Activated CD4-positive, alpha-beta T cell treated with anti-CD3 and anti-CD28 coated beads, Interleukin-2, amount 10 ng/mL, durations not matched to agents 24 days and 14 days (primary cell): ENCODE measurements at regions of chr9 and their contacts with region 1.

Region 1: DNA sequence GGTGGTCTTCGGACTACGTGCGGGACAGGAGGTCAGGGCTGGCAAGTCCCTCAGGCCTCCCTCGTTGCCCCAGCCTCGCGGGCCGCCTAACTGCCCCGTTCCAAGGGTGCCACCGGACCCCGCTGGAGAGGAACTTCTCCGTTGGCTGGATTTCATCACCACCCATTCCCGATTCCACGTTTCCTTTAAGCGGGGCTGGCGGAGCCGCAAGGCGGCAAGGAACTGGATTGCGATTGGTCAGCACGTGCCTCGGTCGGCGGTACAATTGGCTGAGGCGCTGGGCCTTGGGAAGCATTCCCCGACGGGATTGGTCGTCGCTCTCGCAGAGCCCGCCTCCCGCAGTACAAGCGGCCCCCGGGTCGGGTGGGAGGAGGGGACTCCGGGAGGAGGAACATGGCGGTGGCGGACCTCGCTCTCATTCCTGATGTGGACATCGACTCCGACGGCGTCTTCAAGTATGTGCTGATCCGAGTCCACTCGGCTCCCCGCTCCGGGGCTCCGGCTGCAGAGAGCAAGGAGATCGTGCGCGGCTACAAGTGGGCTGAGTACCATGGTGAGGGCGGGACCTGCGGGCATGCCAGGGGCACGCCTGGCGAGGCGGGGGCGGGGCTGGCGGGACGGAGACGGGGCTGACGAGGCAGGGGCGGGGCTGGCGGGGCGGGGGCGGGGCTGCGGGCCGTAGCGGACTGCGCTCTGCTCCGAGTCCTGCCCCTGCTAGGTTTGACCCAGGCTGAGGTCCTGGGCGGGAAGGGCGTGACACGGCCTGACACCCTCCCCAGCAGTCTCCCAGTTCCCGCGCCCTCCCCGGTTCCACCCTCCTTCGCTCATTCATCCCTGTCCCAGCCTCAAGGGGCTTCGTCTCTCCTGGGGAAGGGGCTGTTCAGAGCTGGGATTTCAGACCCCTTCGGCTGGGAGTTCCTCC is at the start of gene PHPT1:
- DNase-seq: peak; percentile 99
- H3K4me3 Mint-ChIP-seq: peak within 1 kb of the TSS; percentile 96
- H3K27ac Mint-ChIP-seq: peak within 1 kb of the TSS; percentile 94
- H3K4me1 Mint-ChIP-seq: peaks cover 11% of the 10 kb centered on the region
- H3K27me3 Mint-ChIP-seq: peaks cover 7% of the 10 kb centered on the region
- total RNA-seq, gene PHPT1: 134 and 145 TPM in 2 replicates

Region 2: DNA sequence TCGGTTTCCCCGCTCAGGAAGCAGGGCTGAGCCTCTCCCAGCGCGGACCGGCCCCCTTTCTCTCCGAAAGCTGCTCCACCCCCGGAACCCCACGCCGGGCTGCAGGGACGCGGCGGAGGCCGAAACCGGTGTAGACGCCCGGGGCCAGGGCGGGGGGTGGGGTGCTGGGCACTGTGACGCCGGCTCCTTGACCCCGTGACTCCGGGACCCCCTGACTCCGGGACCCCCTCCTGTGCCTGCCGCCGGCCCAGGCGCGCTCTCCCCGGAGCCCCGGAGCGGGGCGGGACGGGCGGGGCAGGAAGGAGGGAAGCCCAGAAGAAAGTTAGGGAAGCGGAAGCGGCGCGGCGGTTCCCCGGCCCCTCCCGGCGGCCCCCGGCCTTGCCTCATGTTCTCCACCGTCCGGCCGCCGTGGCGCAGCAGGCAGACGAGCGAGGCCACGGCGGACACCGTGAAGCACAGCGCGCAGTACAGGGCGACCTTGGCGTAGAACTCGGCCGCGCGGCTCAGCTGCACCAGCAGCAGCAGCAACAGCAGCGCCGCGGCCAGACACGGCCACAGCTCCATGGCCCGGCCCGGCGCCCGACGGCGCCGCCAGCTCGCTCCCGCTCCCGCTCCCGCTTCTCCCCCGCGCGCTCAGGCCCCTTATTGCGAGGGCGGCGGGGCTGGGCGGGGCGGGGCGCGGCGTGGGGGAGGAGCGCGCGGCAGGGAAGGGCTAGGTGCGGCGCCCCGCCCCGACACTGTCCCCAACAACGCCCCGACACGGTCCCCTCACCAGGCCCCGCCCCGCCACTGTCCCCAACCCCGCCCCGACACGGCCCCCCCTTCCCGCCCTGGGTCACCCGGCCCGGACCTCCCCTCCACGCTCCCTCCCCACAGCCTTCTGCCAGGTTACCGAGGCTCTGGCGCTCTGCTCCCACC is 162.2 kb before region 1 on chr9 and contains the start of gene AGPAT2:
- intact Hi-C with region 1: no loop called
- DNase-seq: peak; percentile 89
- H3K4me3 Mint-ChIP-seq: peak within 1 kb of the TSS; percentile 81
- H3K27ac Mint-ChIP-seq: peak within 1 kb of the TSS; percentile 65
- H3K4me1 Mint-ChIP-seq: peaks cover 4% of the 10 kb centered on the region
- H3K27me3 Mint-ChIP-seq: peaks cover 4% of the 10 kb centered on the region
- total RNA-seq, gene AGPAT2: 25.6 and 25.9 TPM in 2 replicates

Region 3: DNA sequence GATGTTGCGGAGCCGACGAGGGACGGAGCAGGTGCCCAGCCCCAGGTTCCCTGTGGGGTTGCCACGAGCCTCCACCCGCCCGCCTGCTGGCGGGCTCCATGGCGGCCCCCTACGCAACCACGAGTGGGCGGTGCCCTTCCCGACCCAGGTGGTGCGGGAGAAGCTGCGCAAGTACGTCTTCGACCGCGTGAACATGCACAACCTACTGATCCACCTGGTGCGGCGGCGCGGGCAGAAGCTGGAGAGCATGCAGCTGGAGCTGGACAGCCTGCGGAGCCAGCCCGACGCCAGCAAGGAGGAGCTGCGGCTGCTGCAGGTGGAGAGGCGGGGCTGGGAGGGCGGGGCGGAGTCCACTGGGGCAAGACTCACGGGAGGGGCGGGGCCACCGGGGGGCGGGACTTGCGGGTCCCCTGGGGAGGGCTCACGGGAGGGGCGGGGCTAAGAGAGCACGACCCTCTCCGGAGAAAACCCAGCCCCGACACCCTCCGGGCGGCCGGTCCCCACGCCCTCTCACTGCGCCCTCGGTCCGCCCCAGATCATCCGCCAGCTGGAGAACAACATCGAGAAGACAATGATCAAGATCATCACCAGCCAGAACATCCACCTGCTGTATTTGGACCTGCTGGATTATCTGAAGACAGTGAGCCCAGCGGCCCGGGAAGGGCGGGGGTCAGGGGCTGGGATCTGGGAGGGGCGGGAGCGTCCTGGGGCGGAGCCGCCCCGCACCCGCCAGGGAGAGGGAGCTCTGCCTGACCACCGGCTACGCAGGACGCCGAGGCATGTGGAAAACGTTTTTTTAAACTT is 49.2 kb before region 1 on chr9:
- intact Hi-C with region 1: loop called (anchors 2 kb)
- DNase-seq: peak; percentile 91
- H3K4me3 Mint-ChIP-seq: peak overlapping the region; percentile 86
- H3K27ac Mint-ChIP-seq: peak overlapping the region; percentile 59
- H3K4me1 Mint-ChIP-seq: peaks cover 10% of the 10 kb centered on the region
- H3K27me3 Mint-ChIP-seq: peaks cover 26% of the 10 kb centered on the region

Region 4: DNA sequence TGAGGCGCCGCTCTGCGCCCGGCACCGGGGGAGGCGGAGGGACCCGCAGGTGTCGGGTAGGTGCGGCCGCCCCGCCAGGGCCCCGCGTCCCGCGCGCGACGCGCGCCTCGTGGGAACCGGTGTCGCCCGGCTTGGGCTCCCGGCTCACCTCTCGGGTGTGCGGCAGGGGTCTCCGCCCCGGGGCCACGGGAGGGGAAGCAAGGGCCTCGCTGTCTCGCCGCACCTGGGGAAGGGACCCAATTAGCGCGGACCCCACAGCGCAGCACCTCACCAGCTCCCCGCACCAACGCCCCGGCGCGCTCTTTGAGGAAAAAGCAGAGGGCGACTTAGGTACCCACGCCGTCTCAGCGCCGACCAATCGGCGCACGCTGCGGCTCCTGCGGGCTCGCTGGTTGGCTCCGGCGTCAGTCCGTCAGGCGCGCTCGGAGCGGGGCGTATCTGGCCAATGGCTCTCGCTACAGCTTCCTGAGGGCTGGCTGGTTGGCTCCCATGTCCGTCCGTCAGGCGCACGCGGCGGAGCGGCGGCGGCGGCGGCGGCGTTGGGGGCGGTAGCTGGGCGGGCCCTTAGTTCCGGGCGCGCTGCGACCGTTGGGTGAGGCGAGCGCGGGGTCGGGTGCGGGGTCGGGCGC is 36.8 kb after region 1 on chr9 and contains the start of gene TRAF2:
- intact Hi-C with region 1: loop called (anchors 1 kb)
- DNase-seq: peak; percentile 99
- H3K4me3 Mint-ChIP-seq: peak within 1 kb of the TSS; percentile 100
- H3K27ac Mint-ChIP-seq: peak within 1 kb of the TSS; percentile 95
- H3K4me1 Mint-ChIP-seq: peaks cover 37% of the 10 kb centered on the region
- H3K27me3 Mint-ChIP-seq: no peaks in the 10 kb centered on the region
- total RNA-seq, gene TRAF2: 61.6 and 66.6 TPM in 2 replicates

Region 5: DNA sequence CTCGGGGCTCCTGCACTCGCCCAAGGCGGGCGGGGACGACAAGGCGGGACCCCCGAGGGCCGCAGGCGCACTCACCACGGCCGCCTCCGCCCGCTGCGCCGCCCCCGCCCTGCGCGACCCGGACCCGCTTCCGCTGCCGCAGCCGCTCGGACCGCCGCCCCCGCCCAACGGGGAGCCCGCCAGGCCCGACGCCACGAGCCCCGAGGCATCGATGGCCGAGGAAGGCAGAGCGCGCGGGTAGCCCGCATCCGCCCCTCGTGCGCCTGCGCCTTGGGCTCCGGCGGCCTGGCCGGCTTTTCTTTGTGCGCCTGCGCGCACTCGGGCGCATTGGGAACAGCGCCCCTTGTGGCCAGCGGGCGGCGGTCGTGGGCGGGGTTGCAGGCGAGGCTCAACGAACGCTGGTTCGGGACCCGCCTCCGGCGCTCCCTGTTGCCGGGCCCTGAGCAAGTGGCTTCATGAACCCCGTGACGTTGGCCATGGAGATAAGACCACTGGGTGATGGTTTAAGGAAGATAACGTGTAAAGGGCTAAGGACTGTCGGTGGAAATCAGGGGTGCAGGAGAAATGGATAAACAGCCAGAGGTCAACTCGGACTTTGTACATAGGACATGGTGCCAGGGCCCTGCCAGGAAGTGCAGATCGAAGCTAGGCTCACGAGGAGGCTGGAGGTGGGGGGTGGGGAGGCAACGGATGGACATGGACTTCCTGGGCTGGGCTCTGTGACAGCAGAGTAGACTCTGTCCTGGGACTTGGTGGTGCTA is 95.4 kb after region 1 on chr9 and contains the starts of genes C8G and FBXW5:
- intact Hi-C with region 1: loop called (anchors 1 kb)
- DNase-seq: peak; percentile 99
- H3K4me3 Mint-ChIP-seq: peak within 1 kb of the TSS; percentile 83
- H3K27ac Mint-ChIP-seq: peak within 1 kb of the TSS; percentile 87
- H3K4me1 Mint-ChIP-seq: peaks cover 3% of the 10 kb centered on the region
- H3K27me3 Mint-ChIP-seq: no peaks in the 10 kb centered on the region
- total RNA-seq, gene C8G: 0.69 and 1.7 TPM in 2 replicates
- total RNA-seq, gene FBXW5: 92.7 and 93.6 TPM in 2 replicates

Region 6: DNA sequence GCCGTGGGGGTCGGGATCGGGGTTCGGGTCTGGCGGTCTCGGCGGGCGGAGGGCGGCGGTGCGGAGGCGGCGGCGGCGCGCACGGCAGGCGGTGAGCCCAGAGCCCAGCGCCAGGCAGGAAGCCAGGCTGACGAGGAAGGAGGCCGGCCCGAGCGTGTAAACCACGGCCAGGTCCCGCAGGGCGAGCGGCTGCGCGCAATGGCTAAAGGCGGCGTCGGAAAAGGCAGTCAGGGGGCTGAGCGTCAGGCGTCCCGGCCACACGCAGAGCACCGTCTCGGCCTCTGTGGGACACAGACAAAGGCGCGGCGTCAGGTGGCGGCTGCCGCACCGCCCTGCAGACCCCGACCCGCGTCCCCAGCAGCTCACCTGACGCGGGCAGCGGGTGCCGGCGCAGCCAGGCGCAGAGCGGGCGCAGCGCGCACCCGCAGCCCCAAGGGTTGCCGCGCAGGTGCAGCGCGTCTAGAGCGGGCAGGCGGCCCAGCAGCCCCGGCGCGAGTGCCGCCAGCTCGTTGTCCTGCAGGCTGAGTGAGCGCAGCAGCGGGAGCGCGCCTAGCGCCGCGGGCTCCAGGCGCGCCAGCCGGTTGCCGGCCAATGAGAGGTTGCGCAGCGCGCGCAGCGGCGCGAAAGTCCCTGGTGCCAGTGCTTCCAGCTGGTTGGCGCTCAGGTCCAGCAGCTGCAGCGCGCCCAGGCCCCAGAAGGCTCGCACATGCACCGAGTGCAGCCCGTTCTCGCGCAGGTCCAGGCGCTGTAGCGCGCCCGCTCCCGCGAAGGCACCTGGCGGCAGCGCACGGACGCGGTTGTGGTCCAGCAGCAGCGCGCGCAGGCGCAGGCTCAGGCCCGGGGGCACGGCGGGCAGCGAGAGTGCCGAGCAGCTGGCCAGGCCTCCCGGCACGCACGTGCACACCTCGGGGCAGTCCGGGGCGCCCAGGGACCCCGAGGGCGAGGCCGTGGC is 319.9 kb after region 1 on chr9:
- intact Hi-C with region 1: loop called (anchors 10 kb)
- DNase-seq: peak; percentile 75
- H3K4me3 Mint-ChIP-seq: peak overlapping the region; percentile 66
- H3K27ac Mint-ChIP-seq: no peak overlapping the region
- H3K4me1 Mint-ChIP-seq: no peaks in the 10 kb centered on the region
- H3K27me3 Mint-ChIP-seq: peaks cover 31% of the 10 kb centered on the region